ENCODE measurements at regions of chr10 and their contacts with region 1.

Region 1: GRCh38 chr10:88932539-88933256 is 19.9 kb downstream of the ACTA2 start:
- DNase-seq: peak; percentile 91
- H3K4me3 Mint-ChIP-seq: no peak overlapping the region
- H3K27ac Mint-ChIP-seq: peak overlapping the region; percentile 64
- H3K4me1 Mint-ChIP-seq: peaks cover 25% of the 10 kb centered on the region
- H3K27me3 Mint-ChIP-seq: no peaks in the 10 kb centered on the region
- CTCF ChIP-seq: peak; percentile 77

Region 2: DNA sequence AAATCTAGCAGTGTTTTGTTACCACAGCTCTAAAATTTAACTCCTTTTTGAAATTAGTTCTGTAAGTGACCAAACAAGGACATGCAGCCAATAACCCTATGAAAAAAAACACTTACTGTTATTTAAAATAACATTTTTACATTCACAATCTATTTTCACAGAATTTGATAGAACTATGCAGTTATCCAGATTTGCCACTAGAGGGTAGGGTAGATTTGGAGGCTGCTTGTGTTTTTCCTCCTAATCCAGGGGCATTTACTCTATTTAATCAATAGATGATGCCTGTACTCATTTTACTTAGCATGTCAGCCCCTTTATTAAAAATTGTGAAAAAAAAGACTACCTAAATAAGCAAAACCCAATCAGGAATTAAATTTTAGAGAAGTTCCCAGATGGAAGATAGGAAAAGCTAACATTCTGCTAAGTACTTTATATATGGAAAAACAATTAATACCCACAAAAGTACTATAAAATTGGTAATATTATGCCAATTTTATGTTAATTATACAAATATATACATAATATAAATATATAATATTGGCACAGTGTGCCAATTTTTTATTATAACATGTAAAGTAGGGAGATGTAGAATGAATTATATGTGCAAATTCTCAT is 244.7 kb before region 1 on chr10:
- CTCF ChIA-PET with region 1: interaction called, 15 read pairs
- POLR2A ChIA-PET with region 1: no interaction called
- intact Hi-C with region 1: loop called (anchors 5 kb)
- DNase-seq: peak; percentile 40
- H3K4me3 Mint-ChIP-seq: no peak overlapping the region
- H3K27ac Mint-ChIP-seq: no peak overlapping the region
- H3K4me1 Mint-ChIP-seq: no peaks in the 10 kb centered on the region
- H3K27me3 Mint-ChIP-seq: no peaks in the 10 kb centered on the region
- CTCF ChIP-seq: peak; percentile 75

Region 3: DNA sequence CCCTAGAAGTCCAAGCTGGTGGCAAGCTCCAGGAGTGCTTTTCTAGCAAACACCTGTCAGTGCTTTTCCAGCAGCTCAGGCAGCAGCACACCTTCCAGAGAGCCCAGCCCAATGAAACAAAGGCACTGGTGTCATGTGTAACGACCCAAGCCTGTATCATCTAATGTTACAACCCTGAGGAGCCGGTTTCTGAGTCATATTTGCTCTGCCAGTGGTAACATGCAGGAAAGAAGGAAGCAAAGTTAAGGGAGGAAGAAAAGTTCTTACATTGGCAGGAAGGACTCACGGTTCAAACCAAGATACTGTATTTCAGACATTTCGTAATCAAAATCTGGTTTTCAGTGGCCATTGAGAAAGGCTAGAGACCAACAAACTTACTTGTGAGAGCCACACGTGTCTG is 81.0 kb before region 1 on chr10 and contains the start of gene ANKRD22:
- CTCF ChIA-PET with region 1: interaction called, 17 read pairs
- POLR2A ChIA-PET with region 1: interaction called, 4 read pairs
- intact Hi-C with region 1: no loop called
- DNase-seq: peak; percentile 95
- H3K4me3 Mint-ChIP-seq: peak within 1 kb of the TSS; percentile 49
- H3K27ac Mint-ChIP-seq: peak within 1 kb of the TSS; percentile 88
- H3K4me1 Mint-ChIP-seq: peaks cover 32% of the 10 kb centered on the region
- H3K27me3 Mint-ChIP-seq: no peaks in the 10 kb centered on the region
- CTCF ChIP-seq: no peak
- total RNA-seq, gene ANKRD22: 0.26 TPM in 1 of 2 replicates, not detected in the other

Region 4: GRCh38 chr10:88901206-88901983 is 31.3 kb before region 1 on chr10:
- CTCF ChIA-PET with region 1: interaction called, 24 read pairs
- POLR2A ChIA-PET with region 1: interaction called, 4 read pairs
- intact Hi-C with region 1: no loop called
- DNase-seq: no peak
- H3K4me3 Mint-ChIP-seq: no peak overlapping the region
- H3K27ac Mint-ChIP-seq: peak overlapping the region; percentile 27
- H3K4me1 Mint-ChIP-seq: peaks cover 11% of the 10 kb centered on the region
- H3K27me3 Mint-ChIP-seq: no peaks in the 10 kb centered on the region
- CTCF ChIP-seq: no peak

Region 5: GRCh38 chr10:88949912-88950837 is 17.5 kb after region 1 on chr10:
- CTCF ChIA-PET with region 1: interaction called, 26 read pairs
- POLR2A ChIA-PET with region 1: interaction called, 3 read pairs
- intact Hi-C with region 1: no loop called
- DNase-seq: no peak
- H3K4me3 Mint-ChIP-seq: no peak overlapping the region
- H3K27ac Mint-ChIP-seq: no peak overlapping the region
- H3K4me1 Mint-ChIP-seq: peaks cover 20% of the 10 kb centered on the region
- H3K27me3 Mint-ChIP-seq: no peaks in the 10 kb centered on the region
- CTCF ChIP-seq: no peak

Region 6: DNA sequence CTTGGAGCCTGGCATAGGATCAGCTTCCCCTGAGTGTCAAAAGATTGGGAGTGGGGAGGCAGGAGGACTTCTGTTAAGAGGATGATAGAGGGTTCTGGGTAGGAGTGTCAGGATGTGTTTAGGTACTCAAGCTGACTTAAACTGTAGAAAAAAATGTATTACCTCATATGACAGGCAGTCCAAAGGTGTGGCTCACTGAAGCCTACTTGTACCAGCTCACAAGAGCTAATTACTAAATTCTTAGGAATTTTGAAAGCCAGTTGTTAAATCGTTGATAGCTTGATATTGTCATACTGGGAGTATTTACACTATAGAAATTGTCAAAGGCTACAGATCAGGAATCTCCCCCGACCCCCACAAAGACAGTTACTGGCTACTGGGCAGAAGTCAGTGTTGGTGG is 90.0 kb after region 1 on chr10:
- CTCF ChIA-PET with region 1: interaction called, 20 read pairs
- POLR2A ChIA-PET with region 1: interaction called, 4 read pairs
- intact Hi-C with region 1: no loop called
- DNase-seq: no peak
- H3K4me3 Mint-ChIP-seq: no peak overlapping the region
- H3K27ac Mint-ChIP-seq: no peak overlapping the region
- H3K4me1 Mint-ChIP-seq: peaks cover 24% of the 10 kb centered on the region
- H3K27me3 Mint-ChIP-seq: no peaks in the 10 kb centered on the region
- CTCF ChIP-seq: no peak

Region 7: DNA sequence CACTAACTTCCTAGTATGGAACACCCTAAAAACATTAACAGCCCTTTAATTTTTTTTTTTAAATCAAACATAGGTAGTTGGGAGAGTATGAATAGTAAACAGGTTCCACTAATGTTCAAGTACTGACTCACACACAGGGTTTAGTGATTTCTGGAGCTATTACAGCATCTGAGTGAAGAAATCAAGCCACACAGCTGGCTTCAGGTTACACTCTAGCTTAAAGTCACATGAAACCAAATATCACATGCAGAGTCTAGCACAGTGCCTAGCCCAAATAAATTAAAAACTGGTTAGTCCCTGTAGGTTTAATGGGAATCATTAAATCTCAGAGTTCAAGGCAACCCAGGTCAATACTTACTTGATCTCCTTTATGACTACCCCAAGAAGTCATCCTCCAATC is 700.8 kb after region 1 on chr10:
- CTCF ChIA-PET with region 1: no interaction called
- POLR2A ChIA-PET with region 1: no interaction called
- intact Hi-C with region 1: no loop called
- DNase-seq: peak; percentile 79
- H3K4me3 Mint-ChIP-seq: no peak overlapping the region
- H3K27ac Mint-ChIP-seq: peak overlapping the region; percentile 54
- H3K4me1 Mint-ChIP-seq: peaks cover 20% of the 10 kb centered on the region
- H3K27me3 Mint-ChIP-seq: no peaks in the 10 kb centered on the region
- CTCF ChIP-seq: no peak